ENCODE measurements at regions of chr7 and their contacts with region 1.

Region 1: DNA sequence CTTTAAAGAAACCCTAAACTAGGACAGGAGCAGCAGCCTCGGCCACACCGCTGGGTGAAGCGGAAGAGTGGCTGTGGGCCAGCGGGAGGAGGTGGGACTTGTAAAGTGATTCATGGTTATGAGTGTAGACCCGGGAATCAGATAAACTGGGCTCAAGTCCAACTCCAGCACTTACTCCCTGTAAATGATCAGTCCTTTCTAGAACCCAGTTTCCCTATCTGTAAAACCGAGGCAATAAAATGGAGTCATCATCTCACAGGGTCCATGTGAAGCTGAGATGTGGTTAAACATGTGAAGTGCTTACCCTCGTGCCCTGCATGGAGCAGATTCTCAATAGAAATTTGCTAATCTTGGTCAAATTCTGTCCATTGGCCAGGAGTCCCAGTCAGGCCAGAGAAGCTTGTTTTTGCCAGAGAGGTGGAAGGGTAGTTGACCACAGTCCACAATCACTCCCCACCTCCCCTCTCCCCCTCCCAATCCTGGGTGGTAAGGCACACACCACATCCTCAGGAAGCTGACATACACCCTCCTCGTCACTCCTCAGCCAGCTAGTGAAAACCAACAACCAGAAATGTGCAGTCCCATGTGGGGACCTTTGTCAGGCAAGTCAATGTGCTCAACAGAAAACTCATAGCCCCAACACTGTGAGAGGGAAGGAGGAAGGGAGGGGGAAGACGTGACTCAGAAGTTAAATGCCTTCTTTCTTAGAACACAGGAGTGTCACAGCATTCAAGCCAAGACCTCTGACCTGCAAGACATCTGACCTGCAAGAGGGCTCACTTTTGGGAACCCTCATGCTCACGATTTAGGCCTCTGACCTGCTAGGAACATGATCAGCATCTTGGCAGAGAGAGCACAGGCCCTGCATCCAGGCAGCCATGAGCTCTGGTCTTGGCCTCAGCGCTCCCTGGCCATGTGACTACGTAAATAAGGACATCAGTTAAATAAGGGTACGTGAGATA is 145.1 kb downstream of the PLXNA4 start:
- DNase-seq: peak; percentile 79
- H3K4me3 Mint-ChIP-seq: no peak overlapping the region
- H3K27ac Mint-ChIP-seq: peak overlapping the region; percentile 65
- H3K4me1 Mint-ChIP-seq: peaks cover 76% of the 10 kb centered on the region
- H3K27me3 Mint-ChIP-seq: no peaks in the 10 kb centered on the region

Region 2: DNA sequence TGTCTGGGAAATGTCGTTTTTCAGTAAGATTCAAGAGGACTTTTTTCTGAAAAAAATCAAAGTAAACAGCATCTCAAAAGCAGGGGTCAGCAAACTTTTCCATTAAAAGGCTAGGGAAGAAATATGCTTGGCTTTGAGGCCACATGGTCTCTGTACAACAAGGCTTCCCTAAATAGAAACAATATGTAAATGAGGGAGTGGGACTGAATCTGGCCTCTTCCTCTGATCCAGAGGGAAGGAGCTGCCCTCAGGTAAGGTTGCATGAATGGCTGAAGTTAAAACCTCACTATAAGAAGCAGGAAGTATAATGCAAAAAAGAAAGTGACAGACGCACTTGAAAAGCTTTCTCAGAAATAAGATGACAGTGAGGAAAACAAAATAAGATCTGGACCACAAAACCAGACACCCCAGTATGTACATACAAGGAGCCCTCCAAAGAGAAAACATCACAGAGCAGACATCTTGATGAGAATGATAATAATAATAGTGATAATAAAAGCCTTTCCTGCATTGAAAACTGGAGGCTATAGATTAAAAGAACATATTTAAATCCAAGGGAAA is 30.0 kb after region 1 on chr7:
- intact Hi-C with region 1: loop called (anchors 2 kb)
- DNase-seq: no peak
- H3K4me3 Mint-ChIP-seq: peak overlapping the region; percentile 46
- H3K27ac Mint-ChIP-seq: peak overlapping the region; percentile 82
- H3K4me1 Mint-ChIP-seq: peaks cover 47% of the 10 kb centered on the region
- H3K27me3 Mint-ChIP-seq: peaks cover 3% of the 10 kb centered on the region

Region 3: GRCh38 chr7:132865366-132866143 is 434.4 kb after region 1 on chr7:
- intact Hi-C with region 1: no loop called
- DNase-seq: no peak
- H3K4me3 Mint-ChIP-seq: no peak overlapping the region
- H3K27ac Mint-ChIP-seq: no peak overlapping the region
- H3K4me1 Mint-ChIP-seq: peaks cover 10% of the 10 kb centered on the region
- H3K27me3 Mint-ChIP-seq: no peaks in the 10 kb centered on the region

Region 4: GRCh38 chr7:133252858-133253518 is 821.8 kb after region 1 on chr7 and contains the start of gene EXOC4:
- intact Hi-C with region 1: loop called (anchors 10 kb)
- DNase-seq: peak; percentile 92
- H3K4me3 Mint-ChIP-seq: peak within 1 kb of the TSS; percentile 94
- H3K27ac Mint-ChIP-seq: peak within 1 kb of the TSS; percentile 87
- H3K4me1 Mint-ChIP-seq: peaks cover 22% of the 10 kb centered on the region
- H3K27me3 Mint-ChIP-seq: peaks cover 3% of the 10 kb centered on the region
- total RNA-seq, gene EXOC4: 65.0 and 70.5 TPM in 2 replicates